Activated naive CD8-positive, alpha-beta T cell treated with anti-CD3 and anti-CD28 coated beads, Interleukin-2, amount 10 ng/mL, durations not matched to agents 7 days and 5 days (primary cell): ENCODE measurements at regions of chr12 and their contacts with region 1.

Region 1: GRCh38 chr12:122399592-122400373 is 22.7 kb downstream of the CLIP1 start:
- DNase-seq: peak; percentile 48
- ATAC-seq: peak; percentile 75
- H3K4me3 Mint-ChIP-seq: no peak overlapping the region
- H3K27ac Mint-ChIP-seq: peak overlapping the region; percentile 72
- H3K4me1 Mint-ChIP-seq: peaks cover 27% of the 10 kb centered on the region
- H3K27me3 Mint-ChIP-seq: no peaks in the 10 kb centered on the region

Region 2: DNA sequence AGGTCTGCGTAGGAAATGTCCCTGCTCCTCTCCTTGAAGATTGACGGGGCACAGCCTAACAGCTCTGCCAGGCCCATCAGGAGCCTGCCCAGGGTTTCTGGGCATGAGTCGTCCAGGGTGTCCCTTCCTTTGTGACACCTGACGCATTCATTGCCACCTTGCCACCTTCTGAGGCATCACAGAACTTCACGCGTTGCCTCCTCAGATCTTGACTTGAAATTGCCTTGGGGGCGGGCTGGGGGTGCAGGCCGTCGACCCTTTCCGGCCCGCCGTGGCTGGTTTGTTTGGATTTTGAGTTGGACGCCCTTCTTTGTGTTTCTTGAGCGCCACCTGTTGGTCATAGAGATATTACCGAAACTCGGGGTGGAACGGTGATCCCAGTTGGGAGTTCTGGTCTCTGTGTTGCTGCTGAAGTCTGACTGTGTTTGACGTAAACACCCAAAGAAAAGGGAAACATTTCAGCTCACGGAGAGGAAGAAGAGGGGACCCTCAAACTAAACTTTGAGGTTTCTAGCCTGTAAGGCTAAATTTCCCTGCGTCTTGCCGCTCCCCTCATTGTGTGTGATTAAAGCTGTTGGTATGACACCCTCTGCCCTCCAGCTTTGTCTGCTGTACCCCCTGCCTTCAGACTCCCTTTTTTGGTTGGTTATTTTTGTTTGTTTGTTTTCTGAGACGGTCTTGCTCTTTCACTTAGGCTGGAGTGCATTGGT is 276.6 kb before region 1 on chr12:
- POLR2A ChIA-PET with region 1: no interaction called
- DNase-seq: peak; percentile 69
- ATAC-seq: peak; percentile 53
- H3K4me3 Mint-ChIP-seq: peak overlapping the region; percentile 54
- H3K27ac Mint-ChIP-seq: peak overlapping the region; percentile 73
- H3K4me1 Mint-ChIP-seq: peaks cover 27% of the 10 kb centered on the region
- H3K27me3 Mint-ChIP-seq: no peaks in the 10 kb centered on the region

Region 3: DNA sequence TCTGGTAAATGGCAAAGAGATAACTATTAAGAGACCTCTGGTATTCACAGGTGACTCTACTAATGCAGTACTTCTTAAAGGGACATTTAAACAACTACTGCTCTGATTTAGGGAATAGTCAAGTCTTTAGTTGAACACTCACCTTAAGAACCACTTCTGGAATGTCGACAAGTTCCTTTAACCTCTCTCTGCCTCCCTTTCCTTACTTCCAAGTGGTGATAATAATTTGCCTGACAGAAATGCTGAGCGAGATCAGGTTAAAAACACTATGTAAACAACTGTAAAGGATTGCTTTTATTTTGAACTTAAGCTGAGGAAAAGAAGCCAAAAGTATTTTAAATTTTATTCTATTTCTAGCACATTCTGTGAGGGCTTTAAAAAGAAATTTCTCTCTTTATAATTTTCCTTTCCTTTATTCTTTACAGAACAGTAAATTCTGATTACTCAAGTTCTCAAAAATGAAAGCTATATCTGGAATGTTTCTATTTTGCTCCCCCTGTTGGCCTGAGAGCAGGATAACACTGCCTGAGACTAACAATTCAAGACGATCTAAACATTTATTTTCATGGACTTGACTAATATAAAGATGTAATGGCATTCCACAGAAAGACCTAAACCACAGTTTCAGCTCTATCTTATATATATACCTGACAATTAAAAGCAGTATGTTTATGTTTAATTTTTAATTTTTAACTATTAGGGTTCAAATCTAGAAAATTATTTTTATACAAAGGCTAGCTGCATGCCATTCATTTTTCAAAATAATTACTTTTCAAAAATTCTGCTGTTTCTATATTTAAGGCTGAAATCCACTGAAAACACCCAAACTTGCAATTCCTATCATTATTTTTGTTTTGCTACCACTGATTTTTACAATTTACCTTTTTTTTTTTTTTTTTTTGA is 71.8 kb after region 1 on chr12:
- POLR2A ChIA-PET with region 1: interaction called, 12 read pairs
- DNase-seq: no peak
- ATAC-seq: peak; percentile 53
- H3K4me3 Mint-ChIP-seq: no peak overlapping the region
- H3K27ac Mint-ChIP-seq: no peak overlapping the region
- H3K4me1 Mint-ChIP-seq: peaks cover 12% of the 10 kb centered on the region
- H3K27me3 Mint-ChIP-seq: no peaks in the 10 kb centered on the region